Calu3 (cell line): ENCODE measurements at regions of chr4 and their contacts with region 1.

Region 1: GRCh38 chr4:76108467-76109181 is 34.1 kb downstream of the ART3 start:
- DNase-seq: no peak
- H3K4me3 Mint-ChIP-seq: no peak overlapping the region
- H3K27ac Mint-ChIP-seq: no peak overlapping the region
- H3K4me1 Mint-ChIP-seq: no peaks in the 10 kb centered on the region
- H3K27me3 Mint-ChIP-seq: no peaks in the 10 kb centered on the region
- CTCF ChIP-seq: no peak

Region 2: GRCh38 chr4:76125816-76126215 is 17.2 kb after region 1 on chr4:
- CTCF ChIA-PET with region 1: no interaction called
- intact Hi-C with region 1: loop called (anchors 1 kb)
- DNase-seq: no peak
- H3K4me3 Mint-ChIP-seq: no peak overlapping the region
- H3K27ac Mint-ChIP-seq: no peak overlapping the region
- H3K4me1 Mint-ChIP-seq: no peaks in the 10 kb centered on the region
- H3K27me3 Mint-ChIP-seq: no peaks in the 10 kb centered on the region
- CTCF ChIP-seq: no peak